ENCODE measurements at regions of chr1 and their contacts with region 1.

Region 1: GRCh38 chr1:197526736-197527371 is 248.4 kb downstream of the DENND1B start:
- DNase-seq: peak; percentile 1
- H3K4me3 ChIP-seq: no peak overlapping the region
- H3K27ac ChIP-seq: no peak overlapping the region
- H3K27me3 ChIP-seq: no peaks in the 10 kb centered on the region
- CTCF ChIP-seq: peak; percentile 55

Region 2: DNA sequence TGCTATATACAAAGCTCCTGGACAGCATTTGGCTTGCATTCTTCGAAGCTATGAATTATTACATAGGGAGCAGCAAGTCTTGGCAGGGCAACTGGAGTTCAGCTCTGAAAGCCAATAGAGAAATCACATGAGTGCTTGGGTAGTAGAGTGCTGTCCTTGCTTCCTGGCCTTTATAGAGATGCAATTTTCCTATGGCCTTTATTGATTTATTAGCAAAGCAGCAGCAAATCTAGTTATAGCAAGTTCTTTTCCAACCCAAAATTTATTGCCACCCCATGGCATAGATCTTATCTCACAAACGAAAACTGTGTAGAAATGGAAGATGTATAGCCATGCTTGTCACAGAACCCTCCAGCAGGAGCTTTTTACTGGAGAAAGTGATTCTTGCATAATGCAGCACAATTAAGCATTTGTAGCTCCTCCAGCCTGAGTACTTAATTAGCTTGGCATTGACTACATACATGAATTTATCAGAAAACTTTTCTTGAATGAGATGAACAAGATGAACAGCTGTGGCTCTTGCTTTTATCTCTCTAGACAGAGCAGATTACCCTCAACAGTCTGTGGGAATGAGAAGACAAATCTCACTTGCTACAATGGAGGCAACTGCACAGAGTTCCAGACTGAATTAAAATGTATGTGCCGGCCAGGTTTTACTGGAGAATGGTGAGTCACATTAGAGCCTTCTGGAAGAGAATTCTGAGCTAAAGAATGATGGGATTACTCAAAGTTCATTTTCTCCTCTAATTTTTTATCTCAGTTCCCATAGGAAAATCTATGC is 88.7 kb before region 1 on chr1:
- CTCF ChIA-PET with region 1: no interaction called
- POLR2A ChIA-PET with region 1: no interaction called
- DNase-seq: no peak
- H3K4me3 ChIP-seq: no peak overlapping the region
- H3K27ac ChIP-seq: no peak overlapping the region
- H3K27me3 ChIP-seq: no peaks in the 10 kb centered on the region
- CTCF ChIP-seq: no peak

Region 3: GRCh38 chr1:197541411-197541810 is 14.6 kb after region 1 on chr1:
- CTCF ChIA-PET with region 1: interaction called, 12 read pairs
- POLR2A ChIA-PET with region 1: no interaction called
- DNase-seq: no peak
- H3K4me3 ChIP-seq: no peak overlapping the region
- H3K27ac ChIP-seq: no peak overlapping the region
- H3K27me3 ChIP-seq: no peaks in the 10 kb centered on the region
- CTCF ChIP-seq: no peak

Region 4: GRCh38 chr1:197915862-197916499 is 389.1 kb after region 1 on chr1:
- CTCF ChIA-PET with region 1: interaction called, 15 read pairs
- POLR2A ChIA-PET with region 1: no interaction called
- DNase-seq: no peak
- H3K4me3 ChIP-seq: peak overlapping the region; percentile 47
- H3K27ac ChIP-seq: no peak overlapping the region
- H3K27me3 ChIP-seq: peaks cover 98% of the 10 kb centered on the region
- CTCF ChIP-seq: peak; percentile 76

Region 5: DNA sequence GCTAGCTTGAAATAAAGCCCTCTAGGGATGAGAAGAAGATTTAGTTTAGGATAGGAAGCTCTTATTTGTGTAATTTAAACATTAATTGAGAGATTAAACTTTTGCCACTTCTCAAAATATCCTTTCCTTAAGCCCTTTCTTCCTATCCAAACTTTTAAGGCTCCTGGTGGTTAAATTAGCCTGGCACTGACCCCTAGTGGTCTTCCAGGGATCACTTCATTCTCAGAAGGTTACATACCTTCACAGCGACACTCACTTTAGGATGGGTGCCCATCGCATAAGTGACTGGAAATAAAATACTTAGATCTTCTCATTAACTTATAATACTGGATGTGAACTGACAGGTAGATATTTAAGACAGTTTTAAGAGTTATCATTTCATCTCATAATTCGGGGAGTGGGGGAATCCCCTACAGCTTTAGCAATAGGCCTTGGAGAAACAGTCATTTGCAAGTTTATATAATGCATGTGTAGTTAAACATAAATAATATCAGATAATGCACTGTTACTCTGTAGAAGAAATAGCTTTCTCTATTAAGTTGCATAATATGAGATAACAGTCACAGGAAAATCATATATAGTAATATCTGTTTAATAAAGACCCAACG is 397.8 kb after region 1 on chr1:
- CTCF ChIA-PET with region 1: interaction called, 42 read pairs
- POLR2A ChIA-PET with region 1: no interaction called
- DNase-seq: peak; percentile 16
- H3K4me3 ChIP-seq: no peak overlapping the region
- H3K27ac ChIP-seq: no peak overlapping the region
- H3K27me3 ChIP-seq: peaks cover 57% of the 10 kb centered on the region
- CTCF ChIP-seq: peak; percentile 82